Posterior cingulate gyrus (tissue), 11 donors: ENCODE measurements at regions of chr2 and their contacts with region 1.

Region 1: DNA sequence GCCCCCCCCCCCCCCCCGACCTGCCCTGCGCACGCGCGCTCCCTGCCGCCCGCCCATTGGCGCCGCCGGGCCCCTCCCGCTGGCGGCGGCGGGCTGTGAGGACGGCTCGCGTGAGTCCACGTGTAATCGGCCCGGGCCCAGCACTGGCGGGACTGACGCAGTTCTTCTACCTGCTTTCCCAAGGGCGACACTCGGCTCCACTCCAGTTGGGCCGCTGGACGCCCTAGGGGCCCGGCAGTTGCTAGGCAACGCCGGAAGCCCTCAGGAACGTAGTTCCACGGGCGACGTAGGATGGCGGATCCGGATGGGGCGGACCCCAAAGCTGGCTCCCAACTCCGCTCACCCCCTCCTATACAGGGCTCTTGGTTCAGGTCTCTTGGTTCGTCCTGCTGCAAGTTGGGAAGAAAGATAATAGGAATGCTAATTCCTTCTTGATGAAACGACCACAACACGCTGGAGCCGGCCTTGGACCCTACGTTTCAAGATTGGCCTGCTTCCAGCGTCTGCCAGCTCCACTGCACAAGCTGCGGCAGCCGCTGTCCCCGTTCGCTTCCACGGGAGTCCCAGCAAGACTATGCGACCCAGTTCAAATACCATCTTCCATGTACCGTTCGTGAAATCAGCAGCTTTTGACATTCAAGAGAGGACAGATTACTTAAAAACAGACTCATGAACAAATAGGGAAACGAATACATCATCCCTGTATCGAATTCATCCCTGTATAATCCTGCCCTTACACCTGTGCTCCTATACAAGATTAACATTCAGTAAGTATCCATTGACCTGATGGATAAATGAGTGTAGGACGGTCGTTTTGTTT is 415 bp upstream of the MCFD2 start:
- DNase-seq: peak; percentile 81 to 98 (median 85)

Region 2: GRCh38 chr2:46036929-46037328 is 879.1 kb before region 1 on chr2:
- intact Hi-C with region 1: no loop called
- DNase-seq: no peak

Region 3: DNA sequence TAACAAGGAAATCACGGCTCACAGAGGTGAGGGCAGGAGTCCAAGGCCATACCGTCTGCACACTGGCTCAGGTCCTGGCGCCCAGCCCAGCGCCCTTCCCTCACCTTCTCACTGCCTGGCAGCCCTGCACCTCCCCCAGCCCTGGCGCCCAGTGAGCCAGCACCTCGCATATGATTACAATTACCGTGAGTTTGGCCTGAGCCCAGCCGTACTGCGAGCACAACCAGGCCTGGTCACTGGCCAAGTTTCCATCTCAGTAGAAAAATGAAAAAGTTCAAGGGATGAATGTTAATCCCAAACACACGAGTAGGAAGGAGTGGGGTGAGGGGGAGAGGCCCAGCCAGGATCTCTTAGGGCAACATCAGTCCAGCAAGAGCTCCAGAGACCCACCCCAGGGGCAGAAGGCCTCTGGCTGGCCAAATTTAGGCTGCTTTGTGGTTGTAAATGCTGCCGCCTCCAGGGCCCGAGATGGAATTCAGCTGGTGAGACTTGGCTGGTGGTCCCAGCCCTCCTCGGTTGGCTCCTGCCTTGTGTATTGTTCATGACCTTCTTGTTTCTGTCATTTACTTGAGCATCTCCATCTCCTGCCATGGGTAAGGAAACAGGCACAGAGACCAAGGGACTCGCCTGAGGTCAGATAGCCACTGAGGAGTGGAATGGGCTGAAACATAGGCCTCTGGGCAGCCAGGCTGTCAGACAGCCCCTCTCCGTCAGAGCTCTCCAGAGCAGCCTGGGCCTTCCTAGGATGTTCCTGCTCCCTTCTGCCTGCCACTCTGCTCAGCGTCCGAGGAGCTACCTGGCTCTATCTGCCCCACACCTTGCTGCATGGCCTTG is 68.6 kb before region 1 on chr2:
- intact Hi-C with region 1: no loop called
- DNase-seq: peak in 8 of 10 donors; percentile 20 to 78 (median 42)

Region 4: DNA sequence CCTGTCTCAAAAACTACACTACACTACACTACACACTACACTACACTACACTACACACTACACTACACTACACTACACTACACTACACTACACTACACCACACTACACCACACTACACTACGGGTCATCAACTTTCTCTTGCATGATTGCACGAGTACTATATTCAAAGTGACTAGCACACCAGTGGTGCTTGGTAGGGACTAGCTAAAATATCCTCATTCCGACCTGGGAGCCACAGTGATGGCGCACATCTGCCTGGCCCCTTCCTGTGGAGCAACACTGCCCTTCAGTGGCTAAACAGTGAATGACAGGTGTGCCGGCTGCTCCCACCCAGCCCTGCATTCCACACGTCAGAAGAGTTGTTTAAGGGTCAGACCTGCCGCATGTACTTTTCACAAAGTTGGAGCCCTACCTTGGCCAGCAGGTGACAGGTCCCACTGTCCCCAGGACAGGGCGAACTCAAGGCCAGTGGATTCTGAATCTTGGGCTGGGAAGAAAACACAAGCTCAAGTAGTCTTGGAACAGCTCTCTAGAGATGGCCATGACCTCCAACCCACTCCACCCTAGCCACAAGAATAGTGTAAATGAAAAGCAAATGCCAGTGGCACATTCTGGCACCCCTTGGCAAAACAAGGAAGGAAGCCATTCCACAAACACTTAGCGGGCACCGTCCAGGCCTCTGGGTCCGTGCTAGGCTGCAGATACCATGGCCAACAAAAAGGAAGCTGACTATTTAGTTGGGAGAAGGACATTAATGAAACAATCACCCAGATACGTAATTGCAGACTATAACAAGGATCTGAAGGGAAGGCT is 407.2 kb after region 1 on chr2:
- intact Hi-C with region 1: loop called (anchors 5 kb)
- DNase-seq: peak; percentile 57 to 97 (median 82)